HEK293 (cell line): ENCODE measurements at regions of chr17 and their contacts with region 1.

Region 1: DNA sequence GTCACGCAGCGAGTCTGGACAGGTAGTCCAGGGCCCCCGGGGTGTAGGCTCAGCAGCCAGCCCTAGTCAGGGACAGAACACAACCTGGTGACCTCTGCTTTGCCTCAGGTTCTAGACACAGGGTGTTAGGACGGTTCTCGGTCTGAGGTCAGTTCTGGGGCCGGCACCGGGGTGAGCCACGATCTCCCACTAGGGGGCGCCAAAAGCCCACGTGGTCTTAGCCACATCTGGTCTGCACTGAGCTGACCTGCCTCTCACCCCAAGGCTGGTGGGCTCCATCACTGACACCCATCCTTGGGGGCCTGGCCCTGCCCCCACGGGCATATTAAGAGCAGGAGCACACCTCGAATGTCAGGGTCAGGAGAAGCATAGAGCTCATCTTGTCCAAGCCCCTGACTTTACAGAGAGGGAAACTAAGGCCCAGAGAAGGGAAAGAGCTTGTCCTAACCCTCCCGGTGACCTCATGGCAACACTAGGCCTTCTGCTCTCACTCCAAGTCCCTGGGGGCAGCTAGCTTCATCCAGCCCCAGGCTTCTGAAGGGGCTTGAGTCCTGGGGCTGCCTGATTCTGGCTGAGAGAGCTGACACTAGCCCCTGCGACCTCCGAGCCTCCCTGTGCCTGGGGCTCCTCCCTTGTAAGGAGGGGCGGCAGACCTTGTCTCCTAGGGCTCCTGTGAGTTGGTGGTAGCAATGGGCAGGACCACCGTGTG is 9.0 kb downstream of the SLC5A10 start:
- H3K4me3 ChIP-seq: no peak overlapping the region
- H3K27ac ChIP-seq: no peak overlapping the region
- H3K4me1 ChIP-seq: no peaks in the 10 kb centered on the region
- CTCF ChIP-seq: peak; percentile 89

Region 2: DNA sequence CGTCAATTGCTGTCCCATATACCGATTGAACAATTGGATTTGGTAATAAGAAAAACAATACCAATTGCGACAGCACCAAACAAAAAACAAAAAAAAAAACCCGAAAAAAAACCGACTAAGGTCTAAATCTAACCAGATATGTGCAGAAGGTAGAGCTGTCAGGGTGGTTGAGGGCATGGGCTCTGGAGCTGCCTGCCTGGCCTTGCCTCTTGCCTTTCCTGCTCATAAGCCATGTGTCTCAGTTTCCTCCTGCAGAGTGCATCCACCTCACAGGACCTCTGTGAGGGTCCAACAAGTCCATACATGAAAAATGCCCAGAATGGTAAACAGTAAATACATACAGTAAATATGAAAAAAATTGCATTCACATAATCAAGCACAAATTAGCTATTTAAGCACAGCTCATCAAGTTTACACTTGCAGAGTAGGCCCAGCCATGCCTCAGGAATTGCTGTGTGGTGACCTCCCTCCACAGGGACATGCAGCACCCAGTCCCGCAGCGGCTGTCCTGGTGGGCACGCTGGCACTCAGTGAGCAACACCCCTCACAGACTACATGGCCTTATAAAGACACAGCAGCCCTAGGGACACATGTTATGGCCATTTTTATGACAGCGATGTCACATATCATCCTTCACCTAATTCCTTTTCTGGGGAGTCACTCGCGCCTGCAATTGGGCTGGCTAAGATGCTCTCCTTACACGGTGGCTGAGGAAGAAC is 334.6 kb before region 1 on chr17:
- CTCF ChIA-PET with region 1: interaction called, 17 read pairs
- POLR2A ChIA-PET with region 1: no interaction called
- H3K4me3 ChIP-seq: no peak overlapping the region
- H3K27ac ChIP-seq: no peak overlapping the region
- H3K4me1 ChIP-seq: no peaks in the 10 kb centered on the region
- CTCF ChIP-seq: no peak

Region 3: DNA sequence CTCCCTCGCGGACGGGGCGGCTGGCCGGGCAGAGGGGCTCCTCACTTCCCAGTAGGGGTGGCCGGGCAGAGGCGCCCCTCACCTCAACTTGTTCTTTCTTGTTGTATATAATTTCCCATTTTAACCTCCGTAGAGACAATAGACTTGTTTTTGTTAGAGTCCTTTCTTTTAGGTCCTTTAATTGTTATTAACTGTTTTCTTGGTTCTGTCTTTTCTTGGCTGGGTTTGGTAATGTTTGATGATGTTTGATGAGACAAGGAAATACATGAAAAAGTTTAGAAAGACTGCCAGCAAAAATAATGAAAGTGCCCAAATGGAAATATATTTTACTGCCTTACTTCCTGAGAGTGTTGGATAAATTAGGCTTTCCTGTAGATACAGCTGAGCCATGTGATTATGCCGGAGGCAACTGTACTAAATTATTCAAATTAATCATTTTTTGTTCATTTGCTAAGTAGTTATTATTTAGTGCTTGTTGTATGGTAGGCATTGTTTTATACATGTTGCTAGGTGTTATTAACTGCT is 72.1 kb before region 1 on chr17:
- CTCF ChIA-PET with region 1: no interaction called
- POLR2A ChIA-PET with region 1: no interaction called
- H3K4me3 ChIP-seq: no peak overlapping the region
- H3K27ac ChIP-seq: no peak overlapping the region
- H3K4me1 ChIP-seq: no peaks in the 10 kb centered on the region
- CTCF ChIP-seq: no peak

Region 4: GRCh38 chr17:18944646-18945045 is 16.3 kb before region 1 on chr17:
- CTCF ChIA-PET with region 1: interaction called, 25 read pairs
- POLR2A ChIA-PET with region 1: no interaction called
- H3K4me3 ChIP-seq: no peak overlapping the region
- H3K27ac ChIP-seq: no peak overlapping the region
- H3K4me1 ChIP-seq: no peaks in the 10 kb centered on the region
- CTCF ChIP-seq: no peak

Region 5: GRCh38 chr17:18974407-18975132 is 13.6 kb after region 1 on chr17:
- CTCF ChIA-PET with region 1: interaction called, 15 read pairs
- POLR2A ChIA-PET with region 1: interaction called, 3 read pairs
- H3K4me3 ChIP-seq: no peak overlapping the region
- H3K27ac ChIP-seq: no peak overlapping the region
- H3K4me1 ChIP-seq: no peaks in the 10 kb centered on the region
- CTCF ChIP-seq: no peak

Region 6: DNA sequence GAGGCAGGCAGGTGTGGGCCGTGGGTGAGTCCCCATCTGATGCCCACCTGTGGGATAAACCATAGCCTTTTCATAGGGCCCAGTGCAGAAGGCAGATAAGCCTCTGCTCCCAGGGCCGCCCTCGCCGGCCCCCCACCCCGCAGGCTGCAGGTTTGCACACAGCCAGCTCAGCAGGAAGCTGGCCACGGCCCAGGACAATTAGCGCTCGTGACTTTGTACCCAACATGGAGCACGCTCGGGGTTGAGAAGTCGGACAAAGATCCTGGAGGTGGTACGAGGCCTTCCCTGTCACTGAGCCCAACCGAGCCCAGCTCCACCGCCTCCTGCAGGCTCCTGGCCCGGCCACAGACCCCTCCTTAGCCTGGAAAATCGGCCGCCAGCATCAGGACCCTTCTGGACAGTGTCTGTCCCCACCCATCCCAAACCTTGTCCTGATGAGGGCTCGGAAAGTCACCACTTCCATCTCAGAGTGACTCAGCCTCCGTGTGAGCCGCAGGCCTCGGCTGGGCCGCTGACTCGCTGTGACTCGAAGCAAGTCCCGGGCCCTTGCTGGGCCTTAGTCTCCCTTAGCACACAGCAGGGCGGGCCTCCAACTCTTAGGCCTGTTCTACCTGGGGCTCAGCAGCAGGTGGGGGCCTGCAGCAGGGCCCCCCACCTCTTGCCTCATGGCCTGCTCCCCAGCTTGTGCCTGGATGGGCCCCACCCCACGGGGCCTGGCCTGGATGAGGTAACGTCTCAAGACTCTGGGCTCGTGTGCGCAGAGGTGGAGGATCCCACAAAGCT is 20.9 kb after region 1 on chr17:
- CTCF ChIA-PET with region 1: interaction called, 15 read pairs
- POLR2A ChIA-PET with region 1: no interaction called
- H3K4me3 ChIP-seq: no peak overlapping the region
- H3K27ac ChIP-seq: peak overlapping the region; percentile 76
- H3K4me1 ChIP-seq: peaks cover 11% of the 10 kb centered on the region
- CTCF ChIP-seq: no peak

Region 7: GRCh38 chr17:19004421-19005136 is 43.6 kb after region 1 on chr17 and contains the start of gene FAM83G:
- CTCF ChIA-PET with region 1: interaction called, 13 read pairs
- POLR2A ChIA-PET with region 1: no interaction called
- H3K4me3 ChIP-seq: peak within 1 kb of the TSS; percentile 69
- H3K27ac ChIP-seq: peak within 1 kb of the TSS; percentile 72
- H3K4me1 ChIP-seq: peaks cover 7% of the 10 kb centered on the region
- CTCF ChIP-seq: no peak

Region 8: DNA sequence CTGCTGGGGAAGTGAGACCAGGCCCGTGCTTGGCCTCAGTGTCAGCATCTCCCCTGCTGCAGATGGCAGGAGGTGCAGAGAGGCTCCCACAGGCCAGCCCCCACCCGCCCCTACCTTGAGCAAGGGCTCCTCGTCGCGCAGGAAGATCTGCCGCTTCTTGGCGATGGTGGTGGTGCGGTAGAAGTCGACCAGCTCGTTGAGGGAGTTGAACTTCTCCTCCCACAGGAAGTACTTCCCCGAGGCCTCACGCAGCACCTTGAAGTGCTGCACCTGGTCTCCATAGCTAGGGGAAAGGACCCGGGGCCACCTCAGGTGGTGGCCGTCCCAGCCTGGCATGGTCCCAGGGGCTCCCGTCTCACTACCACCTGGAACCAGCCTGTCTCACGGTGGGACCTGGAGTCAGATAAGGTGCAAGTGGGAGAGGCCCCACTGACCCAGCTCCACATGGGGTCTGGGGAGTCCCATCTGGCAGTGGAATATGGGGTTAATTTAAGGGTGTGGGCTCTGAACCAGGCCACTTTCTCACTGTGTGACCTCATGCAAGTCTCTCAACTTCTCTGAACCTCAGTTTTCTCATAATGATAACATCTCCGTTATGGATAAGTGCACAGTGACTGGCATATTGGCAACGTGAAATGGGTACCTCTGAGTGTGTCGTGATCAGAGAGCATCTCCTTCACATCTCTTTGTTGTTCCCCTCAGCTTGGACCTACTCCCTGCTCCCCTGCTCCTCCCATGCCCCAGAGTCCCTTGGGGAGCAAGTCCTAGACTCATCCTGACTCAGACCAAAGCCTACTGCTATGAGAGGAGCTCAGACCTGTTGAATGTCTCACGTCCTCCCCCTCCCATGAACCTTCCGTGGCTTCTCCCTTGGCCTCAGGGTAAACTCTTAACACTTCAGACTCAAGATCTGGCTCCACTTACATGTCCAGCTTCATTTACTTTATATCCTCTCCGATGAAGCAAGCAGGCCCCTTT is 63.4 kb after region 1 on chr17:
- CTCF ChIA-PET with region 1: interaction called, 31 read pairs
- POLR2A ChIA-PET with region 1: no interaction called
- H3K4me3 ChIP-seq: no peak overlapping the region
- H3K27ac ChIP-seq: no peak overlapping the region
- H3K4me1 ChIP-seq: no peaks in the 10 kb centered on the region
- CTCF ChIP-seq: no peak

Region 9: DNA sequence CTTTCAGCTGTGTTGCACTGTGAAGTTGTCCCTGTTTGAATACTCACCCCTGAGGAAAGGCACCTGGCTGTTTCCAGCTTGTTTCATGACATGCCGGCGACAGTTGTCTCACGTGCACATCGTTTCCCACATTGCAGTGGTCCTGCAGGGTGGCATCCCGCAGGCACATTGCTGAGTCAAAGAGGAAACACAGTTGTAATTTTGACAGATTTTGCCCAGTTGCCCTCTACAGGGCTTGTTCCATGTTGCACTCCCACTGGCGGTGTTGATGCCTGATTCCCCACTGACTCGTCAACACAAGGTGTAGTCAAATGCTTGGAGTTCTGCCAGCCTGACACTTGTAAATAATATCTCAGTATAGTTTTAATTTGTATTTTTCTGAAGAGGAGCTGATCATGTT is 300.0 kb after region 1 on chr17:
- CTCF ChIA-PET with region 1: no interaction called
- POLR2A ChIA-PET with region 1: no interaction called
- H3K4me3 ChIP-seq: no peak overlapping the region
- H3K27ac ChIP-seq: no peak overlapping the region
- H3K4me1 ChIP-seq: peaks cover 23% of the 10 kb centered on the region
- CTCF ChIP-seq: no peak; the same call in 1 of the 2 replicates